Endothelial cell of umbilical vein (primary cell): ENCODE measurements at regions of chr1 and their contacts with region 1.

Region 1: DNA sequence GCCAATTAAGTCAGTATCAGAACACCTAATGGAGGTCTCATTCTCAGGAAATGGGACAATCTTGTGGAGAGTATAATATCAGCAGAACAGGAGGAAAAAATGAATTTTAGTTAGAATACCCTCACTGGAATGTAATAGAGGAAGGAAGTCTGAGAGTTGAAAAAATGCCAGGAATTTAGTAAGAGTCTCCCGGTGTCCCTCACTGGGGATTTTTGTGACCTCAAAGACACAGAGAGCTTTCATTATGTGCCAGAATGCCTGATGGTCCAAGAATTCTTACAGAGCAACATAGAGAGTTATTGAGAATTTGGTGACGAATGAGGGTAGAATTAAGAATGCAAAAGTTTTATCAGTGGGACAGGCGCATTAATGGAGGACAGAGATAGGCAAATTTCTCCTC is 443.5 kb upstream of the B3GALT2 start:
- DNase-seq: peak; percentile 52
- H3K4me3 ChIP-seq: no peak overlapping the region
- H3K27ac ChIP-seq: peak overlapping the region; percentile 66
- H3K4me1 ChIP-seq: peaks cover 27% of the 10 kb centered on the region
- H3K27me3 ChIP-seq: no peaks in the 10 kb centered on the region
- CTCF ChIP-seq: no peak
- POLR2A ChIP-seq: no peak

Region 2: GRCh38 chr1:193614817-193615216 is 15.1 kb before region 1 on chr1:
- CTCF ChIA-PET with region 1: no interaction called
- POLR2A ChIA-PET with region 1: no interaction called
- dilution Hi-C with region 1: no loop called
- intact Hi-C with region 1: loop called (anchors 1 kb)
- DNase-seq: peak; percentile 81
- H3K4me3 ChIP-seq: no peak overlapping the region
- H3K27ac ChIP-seq: peak overlapping the region; percentile 95
- H3K4me1 ChIP-seq: peaks cover 13% of the 10 kb centered on the region
- H3K27me3 ChIP-seq: no peaks in the 10 kb centered on the region
- CTCF ChIP-seq: no peak
- POLR2A ChIP-seq: peak; percentile 20